Lower leg skin (tissue), 4 donors: ENCODE measurements at regions of chr2 and their contacts with region 1.

Region 1: DNA sequence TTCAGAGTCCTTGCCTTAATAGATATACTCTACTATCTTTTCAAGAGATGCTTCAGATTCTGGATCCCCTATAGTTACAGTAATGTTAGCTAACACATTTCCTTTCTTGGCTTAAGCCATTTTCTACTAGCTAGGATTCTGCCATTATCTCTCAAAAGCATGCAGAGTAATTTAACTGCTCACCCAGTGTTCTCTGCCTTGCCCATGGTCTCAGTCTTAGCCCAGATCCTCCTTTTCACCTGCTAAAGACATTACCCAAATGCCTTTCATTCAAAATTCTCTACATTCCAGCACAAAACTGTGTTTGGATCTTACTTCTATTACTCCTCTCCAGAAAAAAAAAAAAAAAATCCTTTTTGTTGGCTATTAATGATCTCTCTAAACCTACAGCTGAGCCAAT is 474.2 kb upstream of the LRRTM1 start:
- DNase-seq: no peak
- H3K4me3 ChIP-seq: no peak overlapping the region
- CTCF ChIP-seq: no peak
- POLR2A ChIP-seq: no peak

Region 2: DNA sequence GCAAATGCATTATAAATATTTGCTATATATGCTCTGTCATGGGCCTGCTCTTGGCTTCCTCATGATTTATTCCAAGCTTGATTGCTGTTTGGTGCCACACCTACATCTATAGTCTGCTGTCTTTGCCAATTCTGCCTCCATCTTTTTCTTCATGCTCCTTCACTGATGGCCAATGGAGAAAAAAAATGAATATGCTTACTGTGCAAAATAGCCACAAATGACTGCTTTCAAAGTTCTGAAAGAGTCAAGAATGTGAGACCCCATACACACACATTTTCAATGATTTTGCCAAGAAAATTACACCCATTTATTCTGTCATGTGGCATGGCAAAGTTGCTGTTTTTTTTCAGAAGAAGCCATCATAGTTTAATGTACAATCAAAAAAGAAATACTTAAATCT is 168.6 kb before region 1 on chr2:
- intact Hi-C with region 1: no loop called
- DNase-seq: no peak
- H3K4me3 ChIP-seq: no peak overlapping the region
- CTCF ChIP-seq: no peak
- POLR2A ChIP-seq: no peak

Region 3: DNA sequence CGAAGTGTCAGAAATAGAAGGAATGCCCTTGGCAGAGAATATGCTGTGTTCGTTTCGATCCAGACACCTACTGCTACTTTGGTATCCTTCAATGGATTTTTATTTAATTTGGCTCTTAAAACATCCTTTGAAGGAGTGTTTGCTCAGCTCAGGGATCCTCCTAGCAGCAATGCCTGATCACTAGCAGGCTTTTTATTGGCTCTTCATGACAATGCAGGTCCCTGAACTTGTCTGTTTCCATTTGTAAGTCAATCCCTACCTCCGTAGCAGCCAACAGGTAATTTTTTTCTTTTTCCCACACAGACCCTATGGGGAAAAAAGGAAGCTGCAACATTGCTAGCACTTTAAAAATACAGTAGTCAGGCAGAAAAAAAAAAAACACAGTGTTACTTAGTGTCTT is 107.9 kb before region 1 on chr2:
- intact Hi-C with region 1: no loop called
- DNase-seq: no peak
- H3K4me3 ChIP-seq: no peak overlapping the region
- CTCF ChIP-seq: no peak
- POLR2A ChIP-seq: no peak

Region 4: DNA sequence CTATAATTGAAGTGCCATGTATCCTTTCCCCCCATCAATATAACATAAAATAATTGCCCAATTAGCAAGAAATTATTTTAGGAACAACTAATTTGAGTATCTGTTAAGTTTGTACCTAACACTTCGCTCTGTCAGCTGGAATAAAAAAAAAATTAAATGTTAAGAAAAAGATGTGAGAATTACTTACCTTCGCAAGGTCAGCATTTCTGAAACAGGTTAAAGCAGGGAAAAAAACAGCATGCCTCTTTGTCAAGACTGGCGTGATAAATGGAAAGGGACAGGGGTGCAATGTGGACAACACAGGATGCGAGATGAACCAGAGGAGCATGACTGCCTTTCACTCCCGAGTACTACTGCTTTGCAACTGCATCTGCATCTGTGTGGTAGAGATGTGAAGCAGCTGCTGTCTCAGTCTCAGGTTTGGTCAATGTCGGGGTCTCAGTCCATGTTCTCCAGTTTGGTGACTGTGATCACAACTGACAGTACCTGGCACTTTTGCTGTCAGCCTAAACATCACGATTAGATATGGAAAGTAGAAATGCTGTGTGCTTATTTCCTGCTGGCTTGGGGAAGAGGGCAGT is 91.2 kb after region 1 on chr2:
- intact Hi-C with region 1: no loop called
- DNase-seq: no peak
- H3K4me3 ChIP-seq: no peak overlapping the region
- CTCF ChIP-seq: no peak
- POLR2A ChIP-seq: no peak

Region 5: DNA sequence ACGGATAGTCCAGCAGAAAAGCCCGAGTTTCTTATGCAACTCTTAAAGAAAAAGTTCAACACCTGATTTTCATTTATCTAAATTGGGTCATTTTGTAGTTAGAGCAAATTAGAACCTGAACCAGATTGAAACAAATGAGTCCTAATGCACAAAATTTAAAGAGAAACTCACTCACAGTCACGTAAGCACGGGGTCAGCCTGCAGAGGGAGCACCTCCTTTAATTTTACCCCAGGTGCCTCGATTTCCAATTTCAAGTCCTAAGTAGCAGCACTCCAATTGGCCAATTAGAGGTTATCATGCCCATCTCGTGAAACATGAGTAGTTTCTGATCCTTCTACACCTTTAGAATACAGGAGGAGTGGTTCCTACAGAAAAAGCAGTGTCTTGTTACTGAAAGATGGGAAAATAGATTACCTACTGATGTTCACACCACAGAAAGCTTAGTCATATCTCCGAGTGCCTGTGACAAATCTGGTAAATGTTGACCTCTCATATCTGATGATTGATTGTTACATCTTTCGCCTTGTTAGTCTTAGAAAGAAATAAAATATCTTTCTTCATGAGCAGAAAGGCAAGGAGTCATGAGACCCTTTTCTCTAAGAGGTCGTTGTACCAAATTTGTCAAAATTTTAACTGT is 1455.7 kb after region 1 on chr2:
- intact Hi-C with region 1: loop called (anchors 5 kb)
- DNase-seq: no peak
- H3K4me3 ChIP-seq: no peak overlapping the region
- CTCF ChIP-seq: no peak
- POLR2A ChIP-seq: no peak